IMR-90 (cell line): ENCODE measurements at regions of chr2 and their contacts with region 1.

Region 1: DNA sequence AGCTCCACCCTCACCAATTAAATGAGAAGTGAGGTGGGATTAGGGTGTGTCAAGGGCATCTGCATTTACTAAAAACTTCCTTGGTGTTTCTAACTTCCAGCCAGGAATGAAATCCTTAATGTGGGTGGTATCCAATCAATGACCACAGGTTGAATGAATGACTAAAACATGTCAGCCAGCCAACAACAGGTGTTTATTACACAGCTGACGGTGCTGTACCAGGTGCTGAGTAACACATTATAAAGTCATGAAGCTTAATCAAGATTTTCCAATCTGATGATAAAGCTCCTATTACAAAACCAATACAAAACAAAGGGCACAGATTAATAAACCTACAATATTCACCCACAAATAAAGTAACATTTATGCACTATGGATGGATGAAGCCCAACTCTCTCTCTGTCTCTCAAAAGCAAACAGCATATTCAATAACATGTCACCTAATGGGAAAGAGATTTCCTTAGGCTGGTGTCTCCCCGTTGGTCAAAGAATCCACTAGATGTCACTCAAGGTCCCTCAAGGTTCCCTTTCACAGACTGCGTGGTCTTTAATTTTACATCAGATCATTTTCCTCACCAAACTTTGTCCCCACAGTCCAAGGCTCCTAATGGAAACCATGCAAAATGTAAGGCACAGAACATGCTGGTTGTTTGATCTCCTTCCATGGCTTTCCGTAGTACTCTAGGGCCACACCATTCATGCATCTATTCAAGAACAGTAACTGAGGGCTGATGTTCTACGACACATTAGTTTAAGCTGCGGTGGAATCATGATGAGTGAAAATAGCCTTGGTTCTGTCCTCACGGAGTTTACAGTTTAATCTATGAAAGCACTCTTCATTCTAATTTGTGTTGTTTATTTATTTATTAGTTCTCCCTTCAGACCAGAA is 6.4 kb upstream of the PTPN4 start:
- DNase-seq: peak; percentile 56
- ATAC-seq: peak; percentile 81
- H3K4me3 ChIP-seq: no peak overlapping the region
- H3K27ac ChIP-seq: no peak overlapping the region
- H3K4me1 ChIP-seq: peaks cover 1% of the 10 kb centered on the region; the same call in 1 of the 2 replicates
- H3K27me3 ChIP-seq: peaks cover 2% of the 10 kb centered on the region; the same call in 1 of the 2 replicates
- CTCF ChIP-seq: peak; percentile 78
- POLR2A ChIP-seq: no peak
- RAD21 ChIP-seq: peak; percentile 78

Region 2: DNA sequence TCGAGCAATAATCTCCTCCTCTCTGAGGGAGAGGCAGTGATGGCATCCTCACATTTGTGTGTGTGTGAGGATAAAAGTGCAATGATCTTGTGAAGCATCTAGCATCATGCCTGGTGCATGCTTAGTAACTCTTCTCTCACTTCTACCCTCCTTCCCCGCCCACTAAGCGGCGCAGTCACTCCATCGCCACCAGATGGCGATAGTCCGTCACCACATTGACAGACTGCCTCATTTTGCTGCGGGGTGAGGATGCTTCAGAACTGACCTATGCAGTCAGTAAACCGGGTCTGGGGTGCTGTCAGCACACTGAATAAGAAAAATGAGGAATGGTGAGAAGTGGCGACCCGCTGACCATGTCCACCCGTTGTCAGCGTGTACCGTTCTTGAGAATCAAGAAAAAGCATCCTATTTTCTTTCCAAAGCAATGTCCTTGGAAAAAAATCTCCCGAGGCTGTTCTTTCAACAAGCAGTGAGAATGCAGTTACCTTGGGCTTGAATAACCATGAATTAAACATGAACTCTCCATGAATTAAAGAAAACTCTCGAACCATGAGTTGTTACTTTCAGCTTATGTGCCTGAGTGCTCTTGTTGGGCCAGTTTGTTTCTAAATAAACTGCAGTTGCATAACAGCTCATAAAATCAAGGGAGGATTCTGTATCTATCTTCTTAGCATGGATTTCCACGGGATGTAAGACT is 111.6 kb before region 1 on chr2:
- CTCF ChIA-PET with region 1: no interaction called
- POLR2A ChIA-PET with region 1: no interaction called
- dilution Hi-C with region 1: no loop called
- in situ Hi-C with region 1: no loop called
- intact Hi-C with region 1: loop called (anchors 5 kb)
- DNase-seq: peak; percentile 71
- ATAC-seq: peak; percentile 96
- H3K4me3 ChIP-seq: no peak overlapping the region
- H3K27ac ChIP-seq: no peak overlapping the region
- H3K4me1 ChIP-seq: no peaks in the 10 kb centered on the region
- H3K27me3 ChIP-seq: peaks cover 21% of the 10 kb centered on the region
- CTCF ChIP-seq: peak; percentile 94
- POLR2A ChIP-seq: no peak
- RAD21 ChIP-seq: peak; percentile 86

Region 3: DNA sequence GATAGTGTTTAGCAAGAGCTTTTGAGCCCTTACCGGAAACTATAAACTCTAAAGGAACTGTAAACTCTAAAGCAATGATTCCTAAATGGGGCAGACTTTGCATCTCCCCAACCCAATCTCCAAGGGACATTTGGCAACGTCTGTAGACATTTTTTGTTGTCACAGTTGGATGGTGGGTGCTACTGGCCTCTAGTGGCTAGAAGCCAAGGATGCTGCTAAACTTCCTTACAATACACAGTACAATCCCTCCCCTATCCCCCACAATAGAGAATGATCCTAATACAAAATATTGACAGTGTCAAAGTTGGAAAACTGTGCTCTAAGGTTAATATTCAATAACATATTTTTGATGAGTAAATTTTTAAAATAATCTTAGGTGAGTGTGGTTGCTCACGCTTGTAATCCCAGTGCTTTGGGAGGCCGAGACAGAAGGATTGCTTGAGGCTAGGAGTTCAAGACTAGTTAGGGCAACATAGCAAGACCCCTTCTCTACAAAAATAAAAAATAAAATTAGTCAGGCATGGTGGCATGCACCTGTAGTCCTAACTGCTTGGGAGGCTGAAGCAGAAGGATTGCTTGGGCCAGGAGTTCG is 73.2 kb after region 1 on chr2:
- CTCF ChIA-PET with region 1: interaction called, 12 read pairs
- POLR2A ChIA-PET with region 1: no interaction called
- dilution Hi-C with region 1: no loop called
- in situ Hi-C with region 1: no loop called
- intact Hi-C with region 1: loop called (anchors 1 kb)
- DNase-seq: peak; percentile 21
- ATAC-seq: peak; percentile 50; the same call in 1 of the 2 replicates
- H3K4me3 ChIP-seq: no peak overlapping the region
- H3K27ac ChIP-seq: no peak overlapping the region
- H3K4me1 ChIP-seq: peaks cover 4% of the 10 kb centered on the region
- H3K27me3 ChIP-seq: no peaks in the 10 kb centered on the region
- CTCF ChIP-seq: peak; percentile 50
- POLR2A ChIP-seq: no peak
- RAD21 ChIP-seq: peak; percentile 56

Region 4: GRCh38 chr2:120109186-120110061 is 356.1 kb after region 1 on chr2:
- CTCF ChIA-PET with region 1: no interaction called
- POLR2A ChIA-PET with region 1: no interaction called
- dilution Hi-C with region 1: no loop called
- in situ Hi-C with region 1: no loop called
- intact Hi-C with region 1: loop called (anchors 5 kb)
- DNase-seq: peak; percentile 59
- ATAC-seq: peak; percentile 71
- H3K4me3 ChIP-seq: no peak overlapping the region
- H3K27ac ChIP-seq: no peak overlapping the region
- H3K4me1 ChIP-seq: no peaks in the 10 kb centered on the region; the same call in none of the 2 replicates
- H3K27me3 ChIP-seq: no peaks in the 10 kb centered on the region
- CTCF ChIP-seq: peak; percentile 54
- POLR2A ChIP-seq: no peak
- RAD21 ChIP-seq: peak; percentile 67